ENCODE measurements at regions of chr19 and their contacts with region 1.

Region 1: DNA sequence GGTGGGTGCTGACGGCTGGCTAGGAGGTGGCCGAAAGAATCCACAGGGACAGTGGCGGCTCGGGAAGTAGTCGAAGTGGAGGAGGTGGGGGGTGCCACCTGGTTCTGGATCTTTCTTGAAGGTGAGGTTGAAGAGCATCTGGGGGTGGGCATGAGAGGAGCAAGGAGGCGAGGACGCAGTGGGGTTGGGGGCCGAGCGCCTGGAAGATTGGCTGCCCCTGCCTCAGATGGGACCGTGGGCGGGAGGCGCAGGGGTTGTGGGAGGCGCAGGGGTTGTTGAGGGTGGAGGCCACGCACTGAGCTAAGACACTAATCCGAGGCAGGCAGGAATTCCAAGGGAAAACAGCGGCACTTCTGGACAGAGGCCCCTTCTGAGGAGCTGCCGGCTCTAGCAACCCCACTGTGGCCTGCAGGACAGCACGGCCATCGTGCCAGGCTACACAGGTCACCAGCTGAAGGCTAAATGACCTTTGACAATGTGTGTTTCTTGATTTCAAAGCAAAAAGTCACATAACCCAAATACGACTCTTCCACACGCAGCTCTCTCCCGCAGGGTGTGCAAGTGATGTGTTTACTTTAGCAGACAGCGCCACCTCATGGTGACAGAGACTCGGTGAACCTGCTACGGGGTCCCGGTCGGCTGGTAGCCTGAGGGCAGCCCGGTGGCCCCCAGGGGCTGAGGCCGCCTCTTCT is 44.1 kb upstream of the RANBP3 start:
- DNase-seq: peak; percentile 17
- ATAC-seq: peak; percentile 99
- H3K4me3 ChIP-seq: no peak overlapping the region
- H3K27ac ChIP-seq: no peak overlapping the region
- H3K4me1 ChIP-seq: no peaks in the 10 kb centered on the region
- H3K27me3 ChIP-seq: 0 out of 4 replicates have a peak, but pooled peaks cover 0 to 2% of the 10 kb centered on the region in 2 experiments
- CTCF ChIP-seq: peak; percentile 69 to 87 (median 71)
- EP300 ChIP-seq: no peak
- POLR2A ChIP-seq: no peak
- RAD21 ChIP-seq: peak; percentile 82

Region 2: DNA sequence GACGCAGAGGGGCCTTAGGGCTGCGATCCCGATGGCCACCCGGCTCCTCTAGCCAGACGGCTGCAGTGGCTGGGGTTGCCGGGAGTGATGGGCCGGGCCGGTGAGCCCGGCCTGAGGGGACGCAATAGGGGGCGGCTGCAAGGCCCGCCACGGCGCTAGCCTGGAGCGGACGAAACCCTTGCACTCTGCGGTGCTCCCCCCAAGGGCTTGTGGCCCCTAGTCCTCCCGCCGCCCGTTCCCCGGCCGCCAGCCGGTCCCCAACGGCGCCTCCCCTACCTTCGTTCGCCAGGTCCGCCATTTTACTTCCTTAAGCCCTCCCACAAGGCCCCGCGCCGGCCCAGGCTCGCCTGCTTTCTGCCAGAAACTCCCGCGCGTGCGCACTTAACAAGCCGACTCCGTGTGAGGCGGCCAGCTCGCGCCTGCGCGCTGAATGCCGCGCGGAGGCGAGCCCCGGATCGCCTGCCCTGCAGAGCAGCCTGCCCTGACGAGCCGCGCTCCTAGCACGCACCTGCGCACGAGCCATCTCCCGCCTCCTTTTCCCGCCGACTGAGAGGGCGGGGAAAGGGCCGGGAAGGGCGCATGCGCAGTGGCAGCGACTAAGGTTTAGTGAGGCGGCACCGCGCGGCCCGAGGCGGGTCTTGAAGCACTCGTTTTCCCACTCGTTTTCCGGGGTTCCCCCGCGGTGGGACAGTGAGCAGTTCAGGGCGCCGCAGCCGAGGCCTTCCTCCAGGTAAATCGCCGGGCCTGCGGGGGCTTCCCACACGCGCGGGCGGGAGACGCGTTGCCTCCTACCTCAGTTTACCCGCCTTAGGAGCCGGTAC is 44.0 kb before region 1 on chr19 and contains the start of gene RANBP3:
- CTCF ChIA-PET with region 1: interaction called, 21 read pairs
- POLR2A ChIA-PET with region 1: no interaction called
- RAD21 ChIA-PET with region 1: interaction called, 4 read pairs
- SMC1A ChIA-PET with region 1: interaction called, 3 read pairs
- in situ Hi-C with region 1: no loop called
- intact Hi-C with region 1: no loop called
- DNase-seq: peak; percentile 96
- ATAC-seq: peak; percentile 94
- H3K4me3 ChIP-seq: peak within 1 kb of the TSS; percentile 96
- H3K27ac ChIP-seq: peak within 1 kb of the TSS; percentile 88
- H3K4me1 ChIP-seq: peaks cover 21% of the 10 kb centered on the region
- H3K27me3 ChIP-seq: no peaks in the 10 kb centered on the region
- CTCF ChIP-seq: no peak
- EP300 ChIP-seq: no peak
- POLR2A ChIP-seq: peak; percentile 88
- RAD21 ChIP-seq: no peak
- polyA plus RNA-seq, gene RANBP3: 1.1 to 1.2 TPM

Region 3: DNA sequence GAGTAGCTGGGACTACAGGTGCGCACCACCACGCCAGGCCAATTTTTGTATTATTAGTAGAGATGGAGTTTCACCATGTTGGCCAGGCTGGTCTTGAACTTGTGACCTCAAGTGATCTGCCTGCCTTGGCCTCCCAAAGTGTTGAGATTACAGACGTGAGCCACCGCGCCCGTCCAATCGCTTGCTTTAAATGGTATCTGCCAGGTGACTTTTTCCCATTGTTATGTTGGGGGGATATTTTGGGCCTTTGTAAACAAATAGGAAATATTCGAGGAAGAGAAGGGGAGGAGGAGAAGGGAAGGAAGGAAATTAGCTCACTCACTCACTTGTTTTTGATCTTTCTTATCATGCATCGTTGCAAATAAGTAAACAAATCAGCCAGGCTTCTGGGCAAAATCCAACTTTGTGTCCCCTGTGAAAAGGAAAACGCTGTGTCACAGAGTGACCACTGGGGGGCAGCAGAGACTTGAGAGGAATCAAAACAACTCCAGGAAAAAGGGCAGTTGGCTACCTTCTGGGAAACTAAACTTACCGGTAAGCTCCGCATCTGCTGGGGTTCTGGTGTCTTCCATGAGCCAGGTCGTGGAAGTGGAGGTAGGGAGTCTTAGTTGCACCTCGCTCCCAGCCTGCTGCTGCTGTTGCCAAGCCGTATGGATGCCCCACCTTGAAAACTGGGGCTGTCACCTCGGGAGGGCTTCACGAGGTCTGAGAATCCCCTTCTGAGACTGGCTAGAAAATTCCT is 34.8 kb before region 1 on chr19:
- CTCF ChIA-PET with region 1: interaction called, 54 read pairs
- POLR2A ChIA-PET with region 1: interaction called, 3 read pairs
- RAD21 ChIA-PET with region 1: interaction called, 17 read pairs
- SMC1A ChIA-PET with region 1: interaction called, 26 read pairs
- in situ Hi-C with region 1: no loop called
- intact Hi-C with region 1: loop called (anchors 2 kb)
- DNase-seq: peak; percentile 19
- ATAC-seq: peak; percentile 75
- H3K4me3 ChIP-seq: peak overlapping the region; percentile 40; the same call in 1 of the 2 replicates
- H3K27ac ChIP-seq: no peak overlapping the region
- H3K4me1 ChIP-seq: peaks cover 8% of the 10 kb centered on the region
- H3K27me3 ChIP-seq: no peaks in the 10 kb centered on the region
- CTCF ChIP-seq: peak; percentile 89 to 95 (median 95)
- EP300 ChIP-seq: no peak
- POLR2A ChIP-seq: no peak
- RAD21 ChIP-seq: peak; percentile 84

Region 4: DNA sequence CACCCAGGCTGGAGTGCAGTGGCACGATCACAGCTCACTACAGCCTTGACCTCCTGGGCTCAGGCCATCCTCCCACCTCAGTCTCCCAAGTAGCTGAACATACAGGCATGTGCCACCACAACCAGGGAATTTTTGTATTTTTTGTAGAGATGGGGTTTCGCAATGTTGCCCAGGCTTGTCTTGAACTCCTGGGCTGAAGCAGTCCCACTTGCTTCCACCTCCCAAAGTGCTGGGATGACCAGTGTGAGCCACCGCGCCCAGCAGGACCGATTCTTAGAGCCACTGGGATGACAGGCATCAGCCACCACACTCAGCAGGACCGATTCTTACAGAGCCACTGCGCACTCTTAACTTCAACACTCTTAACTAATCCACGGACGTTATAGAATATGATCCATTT is 10.8 kb after region 1 on chr19:
- CTCF ChIA-PET with region 1: interaction called, 17 read pairs
- POLR2A ChIA-PET with region 1: no interaction called
- RAD21 ChIA-PET with region 1: no interaction called
- SMC1A ChIA-PET with region 1: interaction called, 4 read pairs
- in situ Hi-C with region 1: no loop called
- intact Hi-C with region 1: no loop called
- DNase-seq: no peak
- ATAC-seq: no peak
- H3K4me3 ChIP-seq: no peak overlapping the region
- H3K27ac ChIP-seq: no peak overlapping the region
- H3K4me1 ChIP-seq: peaks cover 5% of the 10 kb centered on the region; the same call in 1 of the 2 replicates
- H3K27me3 ChIP-seq: no peaks in the 10 kb centered on the region
- CTCF ChIP-seq: no peak
- EP300 ChIP-seq: no peak
- POLR2A ChIP-seq: no peak
- RAD21 ChIP-seq: no peak

Region 5: DNA sequence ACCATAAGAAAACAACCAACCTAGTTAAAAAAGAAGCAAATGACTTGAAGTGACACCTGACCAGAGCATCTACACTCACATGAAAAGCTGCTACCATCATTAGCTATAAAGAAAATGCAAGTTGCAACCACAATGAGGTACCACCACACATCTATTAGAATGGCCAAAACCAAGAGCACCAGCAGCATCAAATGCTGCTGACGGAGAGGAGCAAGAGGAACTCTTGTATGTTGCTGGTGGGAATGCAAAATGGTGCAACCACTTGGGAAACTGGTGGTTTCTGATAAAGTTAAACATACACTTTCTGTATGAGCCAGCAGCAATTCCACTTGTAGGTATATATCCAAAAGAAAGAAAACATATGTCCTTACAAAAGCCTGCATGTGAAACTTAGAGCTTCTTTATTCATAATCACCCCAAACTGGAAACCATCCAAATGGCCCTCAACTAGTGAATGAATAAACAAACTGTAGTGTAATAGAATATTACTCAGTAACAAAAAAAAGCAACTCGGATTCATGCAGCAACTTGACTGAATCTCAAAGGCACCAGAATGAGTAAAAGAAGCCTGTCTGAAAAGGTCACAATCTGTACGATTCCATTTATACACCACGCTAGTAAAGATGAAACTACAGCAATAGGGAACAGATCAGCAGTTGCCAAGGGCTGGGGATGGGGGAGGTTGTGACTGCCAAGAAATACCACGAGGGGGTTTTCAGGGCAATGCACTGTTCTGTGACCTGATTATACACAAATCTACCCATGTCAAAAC is 16.8 kb after region 1 on chr19:
- CTCF ChIA-PET with region 1: interaction called, 17 read pairs
- POLR2A ChIA-PET with region 1: no interaction called
- RAD21 ChIA-PET with region 1: interaction called, 4 read pairs
- SMC1A ChIA-PET with region 1: interaction called, 4 read pairs
- in situ Hi-C with region 1: no loop called
- intact Hi-C with region 1: no loop called
- DNase-seq: peak; percentile 82
- ATAC-seq: peak; percentile 97
- H3K4me3 ChIP-seq: no peak overlapping the region; the same call in 1 of the 2 replicates
- H3K27ac ChIP-seq: peak overlapping the region; percentile 67
- H3K4me1 ChIP-seq: peaks cover 19% of the 10 kb centered on the region
- H3K27me3 ChIP-seq: no peaks in the 10 kb centered on the region
- CTCF ChIP-seq: no peak
- EP300 ChIP-seq: peak; percentile 59 to 67; a peak in 2 of 4 replicates
- POLR2A ChIP-seq: no peak
- RAD21 ChIP-seq: no peak

Region 6: DNA sequence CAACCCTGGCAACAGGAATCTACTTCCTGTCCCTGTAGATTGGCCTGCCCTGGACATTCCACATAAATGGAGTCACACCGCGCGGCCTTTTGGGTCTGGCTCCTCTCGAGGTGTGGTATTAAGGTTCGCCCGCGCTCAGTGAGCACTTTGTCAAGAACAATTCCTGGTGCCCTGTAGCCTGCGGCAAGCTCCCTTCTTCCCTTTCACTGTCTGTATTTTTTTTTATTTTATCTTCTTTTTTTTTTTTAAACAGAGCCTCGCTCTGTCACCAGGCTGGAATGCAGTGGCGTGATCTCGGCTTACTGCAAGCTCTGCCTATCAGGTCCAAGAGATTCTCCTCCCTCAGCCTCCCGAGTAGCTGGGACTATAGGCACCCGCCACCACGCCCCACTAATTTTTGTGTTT is 1438.5 kb after region 1 on chr19:
- CTCF ChIA-PET with region 1: no interaction called
- POLR2A ChIA-PET with region 1: no interaction called
- RAD21 ChIA-PET with region 1: no interaction called
- SMC1A ChIA-PET with region 1: no interaction called
- in situ Hi-C with region 1: no loop called
- intact Hi-C with region 1: no loop called
- DNase-seq: no peak
- ATAC-seq: no peak
- H3K4me3 ChIP-seq: no peak overlapping the region
- H3K27ac ChIP-seq: no peak overlapping the region
- H3K4me1 ChIP-seq: no peaks in the 10 kb centered on the region
- H3K27me3 ChIP-seq: no peaks in the 10 kb centered on the region
- CTCF ChIP-seq: no peak
- EP300 ChIP-seq: no peak
- POLR2A ChIP-seq: no peak
- RAD21 ChIP-seq: no peak